Activated T-helper 2 cell treated with anti-CD3 and anti-CD28 coated beads, Interferon-gamma antibody, Interleukin-2, Interleukin-4, amounts not matched to agents 10 μg/mL and 5 μg/mL and 100 μg/mL, durations not matched to agents 14 hours and 24 hours and 36 hours (primary cell): ENCODE measurements at regions of chr3 and their contacts with region 1.

Region 1: GRCh38 chr3:53114011-53114400 is 16.2 kb downstream of the RFT1 start:
- DNase-seq: peak; percentile 77
- H3K4me3 Mint-ChIP-seq: no peak overlapping the region
- H3K27ac Mint-ChIP-seq: no peak overlapping the region
- H3K4me1 Mint-ChIP-seq: peaks cover 10% of the 10 kb centered on the region
- H3K27me3 Mint-ChIP-seq: no peaks in the 10 kb centered on the region

Region 2: DNA sequence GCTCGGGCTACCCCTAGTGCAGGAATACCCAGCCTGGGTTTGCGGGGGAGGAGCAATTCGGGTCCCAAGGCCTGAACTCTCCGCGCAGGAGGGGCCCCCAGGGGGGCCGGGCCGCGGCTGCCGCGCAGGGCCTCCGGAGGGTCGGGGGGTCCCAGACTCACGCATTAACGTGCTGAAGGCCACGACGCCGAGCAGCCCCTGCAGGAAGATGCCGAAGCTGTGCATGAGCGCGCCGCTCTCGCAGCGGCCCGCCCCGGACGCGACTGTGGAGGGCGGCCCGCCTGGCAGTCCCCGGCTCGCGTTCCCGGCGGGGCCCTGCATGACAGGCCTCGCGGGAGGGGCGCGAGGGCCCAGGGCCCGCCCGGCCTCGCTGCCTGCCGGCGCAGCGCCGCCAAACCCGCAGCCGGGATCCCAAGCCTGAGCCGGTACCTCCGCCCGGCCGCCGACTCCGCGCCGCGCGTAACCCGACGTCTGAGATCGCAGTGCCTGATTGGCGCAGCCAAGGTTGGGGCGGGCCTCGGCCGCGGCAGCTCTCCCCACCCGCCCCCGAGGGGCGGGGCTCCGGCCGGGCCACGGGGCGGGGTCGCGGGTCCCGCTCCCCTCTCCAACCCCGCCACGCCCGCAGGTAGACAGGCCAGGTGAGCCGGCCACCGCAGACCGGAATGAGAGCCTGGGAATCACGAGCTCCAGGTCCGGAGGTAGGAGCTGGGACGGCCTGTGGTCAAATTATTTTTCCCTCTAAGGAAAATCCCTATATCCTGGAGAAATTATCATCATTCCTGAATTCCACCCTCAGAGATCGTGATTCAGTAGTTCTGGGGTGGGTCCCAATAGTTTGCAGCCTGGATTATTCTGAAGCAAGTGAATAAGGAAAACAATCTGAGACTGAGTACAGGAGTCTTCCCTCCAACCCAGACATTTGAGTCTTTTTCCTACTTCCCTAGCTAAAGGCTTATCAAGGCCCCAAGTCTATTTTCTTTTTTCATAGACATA is 216.6 kb before region 1 on chr3 and contains the start of gene STIMATE:
- intact Hi-C with region 1: loop called (anchors 2 kb)
- DNase-seq: peak; percentile 85
- H3K4me3 Mint-ChIP-seq: peak within 1 kb of the TSS; percentile 99
- H3K27ac Mint-ChIP-seq: peak within 1 kb of the TSS; percentile 72
- H3K4me1 Mint-ChIP-seq: peaks cover 40% of the 10 kb centered on the region
- H3K27me3 Mint-ChIP-seq: no peaks in the 10 kb centered on the region
- total RNA-seq, gene STIMATE: 17.4 and 17.6 TPM in 2 replicates

Region 3: DNA sequence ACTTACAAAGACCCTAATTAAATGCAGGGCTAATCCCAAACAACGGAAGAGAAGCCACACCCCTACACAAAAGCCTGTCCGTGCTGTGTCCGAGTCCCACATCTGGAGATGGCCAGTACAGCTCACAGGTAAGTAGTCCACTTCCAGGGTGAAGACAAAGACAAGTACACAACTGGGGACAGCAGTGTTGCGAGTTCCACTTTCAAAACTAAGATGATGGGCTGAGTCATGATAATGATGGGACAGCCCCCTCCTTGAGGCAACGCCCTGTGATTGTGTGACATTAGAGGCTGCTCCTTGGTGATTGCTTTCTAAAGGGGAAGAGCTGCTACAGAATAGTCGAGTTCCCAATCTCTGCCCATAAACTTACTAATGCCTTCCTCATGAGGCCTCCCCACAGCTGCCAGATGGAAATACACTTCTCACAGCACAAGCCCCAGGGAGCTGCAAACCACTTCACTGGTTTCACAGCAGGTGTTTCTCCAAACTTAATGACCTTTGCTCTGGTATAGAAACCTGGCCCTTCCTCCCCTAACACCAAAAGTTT is 11.3 kb before region 1 on chr3:
- intact Hi-C with region 1: loop called (anchors 1 kb)
- DNase-seq: peak; percentile 59
- H3K4me3 Mint-ChIP-seq: peak overlapping the region; percentile 71
- H3K27ac Mint-ChIP-seq: peak overlapping the region; percentile 88
- H3K4me1 Mint-ChIP-seq: peaks cover 54% of the 10 kb centered on the region
- H3K27me3 Mint-ChIP-seq: no peaks in the 10 kb centered on the region

Region 4: DNA sequence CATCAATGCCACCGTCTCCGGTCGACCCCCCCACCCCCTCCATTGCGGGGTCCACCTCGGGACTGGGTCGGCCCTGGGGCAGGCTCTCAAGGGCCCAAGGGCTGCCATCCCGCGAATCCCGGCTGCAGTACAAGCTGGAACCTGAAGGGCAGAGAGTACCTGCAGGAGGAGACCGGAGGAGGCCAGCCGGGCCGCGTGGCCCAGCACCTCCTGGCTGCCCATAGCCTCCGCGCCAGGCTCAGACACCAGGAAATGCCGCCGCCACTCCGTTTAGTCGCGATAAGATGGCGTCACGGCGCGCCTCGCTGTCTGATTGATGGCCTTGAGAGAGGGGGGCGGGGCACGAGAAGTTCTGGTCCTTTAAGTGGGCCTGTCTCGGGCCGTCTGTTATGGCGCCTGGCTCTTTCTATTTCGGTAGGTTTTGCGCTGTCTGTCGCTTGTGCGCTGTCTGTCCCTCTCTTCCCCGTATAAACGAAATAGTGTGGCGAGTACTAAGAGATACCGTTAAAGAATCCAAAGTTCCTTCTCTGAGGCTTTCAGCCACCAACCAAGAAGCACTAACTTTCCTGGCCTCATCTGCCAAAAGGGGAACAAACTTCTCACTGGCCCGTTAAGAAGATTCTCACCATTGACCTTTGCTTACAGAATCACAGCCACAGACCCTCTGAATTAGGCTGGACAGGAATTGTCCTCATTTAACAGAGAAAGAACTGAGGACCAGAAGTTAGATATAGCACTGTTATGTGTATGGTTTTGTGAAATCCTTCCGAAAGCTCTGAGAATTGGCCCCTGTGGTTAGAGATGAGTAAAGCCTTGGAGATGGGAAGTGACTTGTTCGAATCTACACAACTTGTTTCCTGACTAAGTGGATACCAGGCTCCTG is 16.4 kb after region 1 on chr3 and contains the start of gene RFT1:
- intact Hi-C with region 1: loop called (anchors 1 kb)
- DNase-seq: peak; percentile 96
- H3K4me3 Mint-ChIP-seq: peak within 1 kb of the TSS; percentile 87
- H3K27ac Mint-ChIP-seq: peak within 1 kb of the TSS; percentile 95
- H3K4me1 Mint-ChIP-seq: peaks cover 17% of the 10 kb centered on the region
- H3K27me3 Mint-ChIP-seq: no peaks in the 10 kb centered on the region
- total RNA-seq, gene RFT1: 36.4 and 38.8 TPM in 2 replicates

Region 5: DNA sequence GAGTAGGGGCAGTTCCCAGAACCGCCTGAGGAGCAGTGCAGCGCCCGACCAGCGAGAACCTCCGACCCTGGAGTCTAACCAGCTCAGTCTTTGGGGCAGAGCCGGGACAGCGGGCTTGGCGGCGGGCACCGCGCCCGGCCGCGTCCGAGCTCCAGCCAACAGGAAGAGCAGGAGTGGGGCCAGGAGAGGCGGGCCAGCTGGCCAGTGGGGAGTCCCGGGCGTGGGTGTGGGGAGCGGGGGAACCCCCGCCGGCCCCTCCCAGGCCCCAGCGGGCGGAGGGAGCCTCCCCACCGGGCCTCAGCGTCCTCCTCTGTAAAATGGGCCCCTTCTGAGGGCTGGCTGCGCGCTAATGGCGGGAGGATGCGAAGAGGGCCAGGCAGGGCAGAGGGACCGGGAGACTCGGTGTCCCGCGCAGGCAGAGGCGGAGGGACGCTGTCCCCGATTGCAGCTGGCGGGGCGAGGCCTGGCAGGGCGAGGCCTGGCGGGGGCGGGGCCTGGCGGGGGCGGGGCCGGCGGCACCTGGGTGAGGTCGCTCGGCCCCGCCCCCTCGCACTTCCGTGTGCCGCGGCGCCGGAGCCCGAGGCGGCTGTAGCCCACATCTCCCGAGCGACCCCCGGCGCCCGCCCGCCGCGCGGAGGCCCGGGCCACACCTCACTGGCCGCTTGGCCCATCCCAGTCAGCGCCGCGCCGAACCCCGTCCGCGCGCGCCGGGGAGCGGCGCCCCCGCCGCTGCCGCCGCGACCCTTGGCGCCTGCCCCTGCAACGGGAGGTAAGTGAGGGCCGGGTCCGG is 46.8 kb after region 1 on chr3 and contains the start of gene PRKCD:
- intact Hi-C with region 1: loop called (anchors 5 kb)
- DNase-seq: peak; percentile 68
- H3K4me3 Mint-ChIP-seq: peak within 1 kb of the TSS; percentile 88
- H3K27ac Mint-ChIP-seq: peak within 1 kb of the TSS; percentile 81
- H3K4me1 Mint-ChIP-seq: peaks cover 24% of the 10 kb centered on the region
- H3K27me3 Mint-ChIP-seq: peaks cover 21% of the 10 kb centered on the region
- total RNA-seq, gene PRKCD: 30.6 and 31.7 TPM in 2 replicates

Region 6: DNA sequence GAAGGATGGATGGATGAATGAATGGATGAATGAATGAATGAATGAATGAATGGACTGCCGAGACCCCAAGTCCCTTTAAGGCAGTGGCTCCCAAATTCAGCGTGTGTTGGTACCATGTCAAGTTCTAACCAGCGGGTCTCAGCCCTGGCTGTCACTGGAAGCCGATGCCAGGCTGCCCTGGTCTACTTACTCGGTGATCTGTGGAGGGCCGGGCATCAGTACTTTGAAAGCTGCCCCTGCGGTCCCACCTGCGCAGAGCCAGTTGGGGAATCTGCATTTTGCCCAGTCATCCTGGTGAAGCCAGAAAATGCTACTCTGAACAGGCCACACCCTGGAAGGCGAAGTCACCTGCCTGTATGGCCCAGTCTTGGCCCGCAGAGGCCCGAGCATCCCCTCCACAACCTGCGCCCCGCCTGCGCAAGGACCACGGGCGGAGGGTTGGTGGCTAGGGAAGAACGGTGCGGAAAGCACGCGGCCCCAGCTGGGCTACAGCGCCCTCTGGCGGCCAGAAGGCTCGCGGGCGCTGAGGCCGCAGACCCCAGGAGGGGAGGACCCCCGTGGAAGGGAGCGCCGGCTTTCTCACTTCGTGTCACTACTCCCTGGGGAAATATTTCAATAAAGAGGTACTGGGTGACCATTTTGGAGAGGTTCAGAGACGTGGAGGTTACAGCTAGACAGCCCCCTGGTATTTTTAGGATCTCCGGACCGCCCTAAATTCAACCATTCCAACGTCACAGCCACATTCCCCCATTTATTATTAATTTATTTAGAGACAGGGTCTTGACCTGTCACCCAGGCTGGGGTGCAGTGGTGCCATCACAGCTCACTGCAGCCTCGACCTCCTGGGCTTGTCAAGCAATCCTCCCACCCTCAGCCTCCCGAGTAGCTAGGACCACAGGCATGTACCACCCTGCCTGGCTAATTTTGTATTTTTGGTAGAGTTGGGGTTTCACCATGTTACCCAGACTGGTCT is 81.9 kb after region 1 on chr3:
- intact Hi-C with region 1: loop called (anchors 1 kb)
- DNase-seq: peak; percentile 39
- H3K4me3 Mint-ChIP-seq: no peak overlapping the region
- H3K27ac Mint-ChIP-seq: no peak overlapping the region
- H3K4me1 Mint-ChIP-seq: peaks cover 6% of the 10 kb centered on the region
- H3K27me3 Mint-ChIP-seq: no peaks in the 10 kb centered on the region

Region 7: GRCh38 chr3:53347261-53348064 is 233.5 kb after region 1 on chr3 and contains the start of gene DCP1A:
- intact Hi-C with region 1: loop called (anchors 5 kb)
- DNase-seq: peak; percentile 95
- H3K4me3 Mint-ChIP-seq: peak within 1 kb of the TSS; percentile 98
- H3K27ac Mint-ChIP-seq: peak within 1 kb of the TSS; percentile 96
- H3K4me1 Mint-ChIP-seq: peaks cover 35% of the 10 kb centered on the region
- H3K27me3 Mint-ChIP-seq: no peaks in the 10 kb centered on the region
- total RNA-seq, gene DCP1A: 44.0 and 44.3 TPM in 2 replicates